OCI-LY7 (cell line): ENCODE measurements at regions of chr14 and their contacts with region 1.

Region 1: DNA sequence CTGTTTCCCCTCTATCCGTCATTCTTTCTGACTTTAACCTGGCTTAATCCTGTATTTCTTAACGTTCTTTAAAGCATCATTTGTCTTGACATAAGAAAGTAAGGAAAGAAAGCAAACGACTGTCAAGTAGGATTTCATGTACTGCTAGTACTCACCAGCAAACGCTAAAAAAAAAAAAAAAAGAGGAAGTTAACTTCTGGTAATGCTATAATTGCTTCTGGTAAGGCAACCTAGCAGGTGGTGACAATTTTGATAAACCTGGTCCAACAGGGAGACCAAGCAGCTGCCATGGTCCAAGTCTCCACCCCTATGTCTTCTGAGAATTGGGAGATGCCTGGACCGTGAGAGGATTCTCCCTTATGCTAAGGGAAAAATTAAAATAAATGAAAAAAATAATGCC is 306.6 kb downstream of the DAD1 start:
- DNase-seq: peak; percentile 86
- H3K4me3 ChIP-seq: peak overlapping the region; percentile 55
- H3K27ac ChIP-seq: peak overlapping the region; percentile 71
- H3K4me1 ChIP-seq: peaks cover 36% of the 10 kb centered on the region
- CTCF ChIP-seq: no peak

Region 2: GRCh38 chr14:21924479-21924878 is 357.9 kb before region 1 on chr14:
- CTCF ChIA-PET with region 1: no interaction called
- POLR2A ChIA-PET with region 1: no interaction called
- intact Hi-C with region 1: loop called (anchors 10 kb)
- DNase-seq: peak; percentile 98
- H3K4me3 ChIP-seq: peak overlapping the region; percentile 40
- H3K27ac ChIP-seq: peak overlapping the region; percentile 91
- H3K4me1 ChIP-seq: peaks cover 36% of the 10 kb centered on the region
- CTCF ChIP-seq: peak; percentile 62